ENCODE measurements at regions of chr1 and their contacts with region 1.

Region 1: GRCh38 chr1:32716312-32717148 is 14.0 kb upstream of the SYNC start:
- DNase-seq: peak in 5 of 9 experiments; percentile 3 to 58 (median 43)
- ATAC-seq: no peak
- H3K4me3 ChIP-seq: no peak overlapping the region
- H3K4me3 Mint-ChIP-seq: no peak overlapping the region
- H3K27ac ChIP-seq: no peak overlapping the region
- H3K27ac Mint-ChIP-seq: no peak overlapping the region
- H3K4me1 ChIP-seq: no peaks in the 10 kb centered on the region
- H3K4me1 Mint-ChIP-seq: peaks cover 11% of the 10 kb centered on the region
- H3K27me3 ChIP-seq: no peaks in the 10 kb centered on the region
- H3K27me3 Mint-ChIP-seq: peaks cover 7% of the 10 kb centered on the region
- CTCF ChIP-seq: no peak

Region 2: GRCh38 chr1:32205401-32206370 is 510.8 kb before region 1 on chr1 and contains the start of gene IQCC:
- CTCF ChIA-PET with region 1: no interaction called
- POLR2A ChIA-PET with region 1: no interaction called
- intact Hi-C with region 1: no loop called
- DNase-seq: peak; percentile 68 to 94 (median 85)
- ATAC-seq: peak; percentile 57
- H3K4me3 ChIP-seq: peak within 1 kb of the TSS; percentile 65 to 77
- H3K4me3 Mint-ChIP-seq: peak within 1 kb of the TSS; percentile 87
- H3K27ac ChIP-seq: peak within 1 kb of the TSS; percentile 62 to 67
- H3K27ac Mint-ChIP-seq: peak within 1 kb of the TSS; percentile 84
- H3K4me1 ChIP-seq: peaks cover 30% of the 10 kb centered on the region
- H3K4me1 Mint-ChIP-seq: peaks cover 36% of the 10 kb centered on the region
- H3K27me3 ChIP-seq: no peaks in the 10 kb centered on the region
- H3K27me3 Mint-ChIP-seq: no peaks in the 10 kb centered on the region
- CTCF ChIP-seq: no peak
- total RNA-seq, gene IQCC: 1.3 to 2.0 TPM

Region 3: GRCh38 chr1:32684167-32684811 is 32.2 kb before region 1 on chr1:
- CTCF ChIA-PET with region 1: interaction called, 18 read pairs
- POLR2A ChIA-PET with region 1: no interaction called
- intact Hi-C with region 1: no loop called
- DNase-seq: no peak
- ATAC-seq: no peak
- H3K4me3 ChIP-seq: no peak overlapping the region
- H3K4me3 Mint-ChIP-seq: no peak overlapping the region
- H3K27ac ChIP-seq: no peak overlapping the region
- H3K27ac Mint-ChIP-seq: peak overlapping the region; percentile 11
- H3K4me1 ChIP-seq: no peaks in the 10 kb centered on the region
- H3K4me1 Mint-ChIP-seq: no peaks in the 10 kb centered on the region
- H3K27me3 ChIP-seq: no peaks in the 10 kb centered on the region
- H3K27me3 Mint-ChIP-seq: no peaks in the 10 kb centered on the region
- CTCF ChIP-seq: no peak

Region 4: DNA sequence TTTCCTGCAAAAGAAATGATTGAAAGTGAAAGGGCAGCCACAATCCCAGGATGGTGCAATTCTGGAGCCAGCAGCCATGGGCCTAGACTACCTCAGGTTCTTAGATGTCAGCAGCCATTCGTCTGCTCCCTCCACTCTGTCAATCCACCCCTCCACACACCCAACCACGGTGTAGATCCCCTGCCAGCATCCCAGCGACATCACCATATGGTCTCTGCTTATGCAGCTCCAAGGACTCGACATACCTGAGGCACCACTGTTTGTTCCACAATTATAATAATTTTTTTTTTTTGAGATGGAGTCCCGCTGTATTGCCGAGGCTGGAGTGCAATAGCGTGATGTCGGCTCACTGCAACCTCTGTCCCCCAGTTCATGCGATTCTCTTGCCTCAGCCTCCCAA is 20.5 kb before region 1 on chr1:
- CTCF ChIA-PET with region 1: interaction called, 11 read pairs
- POLR2A ChIA-PET with region 1: no interaction called
- intact Hi-C with region 1: no loop called
- DNase-seq: no peak
- ATAC-seq: no peak
- H3K4me3 ChIP-seq: no peak overlapping the region
- H3K4me3 Mint-ChIP-seq: no peak overlapping the region
- H3K27ac ChIP-seq: no peak overlapping the region
- H3K27ac Mint-ChIP-seq: no peak overlapping the region
- H3K4me1 ChIP-seq: no peaks in the 10 kb centered on the region
- H3K4me1 Mint-ChIP-seq: peaks cover 2% of the 10 kb centered on the region
- H3K27me3 ChIP-seq: no peaks in the 10 kb centered on the region
- H3K27me3 Mint-ChIP-seq: peaks cover 4% of the 10 kb centered on the region
- CTCF ChIP-seq: no peak

Region 5: DNA sequence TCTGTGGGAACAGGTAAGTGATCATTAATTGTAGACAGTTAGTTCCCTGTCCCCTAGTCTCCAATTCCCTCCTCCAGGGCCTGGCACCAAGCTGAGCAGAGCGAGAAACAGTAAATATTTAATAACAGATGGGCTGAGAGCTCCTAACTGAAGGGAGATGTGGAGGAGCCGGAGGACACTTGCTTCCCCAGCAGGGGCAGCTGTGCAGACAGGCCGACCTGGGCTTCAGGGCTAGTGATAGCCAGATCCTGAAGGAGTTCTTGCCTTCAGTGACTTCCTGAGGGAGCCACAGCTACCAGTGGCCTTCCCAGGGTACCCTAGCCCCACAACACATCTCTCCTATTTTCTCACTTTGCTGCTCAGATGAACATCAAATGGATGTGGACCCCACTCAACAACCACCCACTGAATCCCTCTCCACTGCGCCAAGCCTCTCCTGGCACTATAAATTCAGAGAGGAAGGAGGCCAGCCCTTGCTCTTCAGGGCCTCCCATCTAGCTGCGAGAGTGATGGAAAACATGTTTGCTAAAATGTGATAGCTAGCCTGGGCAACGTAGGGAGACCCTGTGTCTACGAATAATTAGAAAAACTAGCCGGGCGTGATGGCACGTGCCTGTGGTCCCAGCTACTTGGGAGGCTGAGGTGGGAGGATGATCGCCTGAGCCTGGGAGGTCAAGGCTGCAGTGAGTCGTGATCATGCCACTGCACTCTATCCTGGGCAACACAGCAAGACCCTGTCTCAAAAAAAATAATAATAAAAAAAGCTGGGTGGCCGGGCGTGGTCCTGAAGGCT is 12.9 kb after region 1 on chr1:
- CTCF ChIA-PET with region 1: interaction called, 20 read pairs
- POLR2A ChIA-PET with region 1: no interaction called
- intact Hi-C with region 1: no loop called
- DNase-seq: no peak
- ATAC-seq: no peak
- H3K4me3 ChIP-seq: no peak overlapping the region
- H3K4me3 Mint-ChIP-seq: no peak overlapping the region
- H3K27ac ChIP-seq: no peak overlapping the region
- H3K27ac Mint-ChIP-seq: no peak overlapping the region
- H3K4me1 ChIP-seq: peaks cover 3% of the 10 kb centered on the region
- H3K4me1 Mint-ChIP-seq: peaks cover 12% of the 10 kb centered on the region
- H3K27me3 ChIP-seq: no peaks in the 10 kb centered on the region
- H3K27me3 Mint-ChIP-seq: peaks cover 11% of the 10 kb centered on the region
- CTCF ChIP-seq: no peak

Region 6: GRCh38 chr1:32876341-32877210 is 160.0 kb after region 1 on chr1:
- CTCF ChIA-PET with region 1: interaction called, 91 read pairs
- POLR2A ChIA-PET with region 1: no interaction called
- intact Hi-C with region 1: loop called (anchors 1 kb)
- DNase-seq: peak in 6 of 9 experiments; percentile 25 to 74 (median 68)
- ATAC-seq: peak; percentile 81
- H3K4me3 ChIP-seq: no peak overlapping the region
- H3K4me3 Mint-ChIP-seq: no peak overlapping the region
- H3K27ac ChIP-seq: no peak overlapping the region
- H3K27ac Mint-ChIP-seq: no peak overlapping the region
- H3K4me1 ChIP-seq: no peaks in the 10 kb centered on the region
- H3K4me1 Mint-ChIP-seq: peaks cover 9% of the 10 kb centered on the region
- H3K27me3 ChIP-seq: peaks cover 5 to 21% of the 10 kb centered on the region in 2 experiments
- H3K27me3 Mint-ChIP-seq: peaks cover 47% of the 10 kb centered on the region
- CTCF ChIP-seq: peak; percentile 61

Region 7: DNA sequence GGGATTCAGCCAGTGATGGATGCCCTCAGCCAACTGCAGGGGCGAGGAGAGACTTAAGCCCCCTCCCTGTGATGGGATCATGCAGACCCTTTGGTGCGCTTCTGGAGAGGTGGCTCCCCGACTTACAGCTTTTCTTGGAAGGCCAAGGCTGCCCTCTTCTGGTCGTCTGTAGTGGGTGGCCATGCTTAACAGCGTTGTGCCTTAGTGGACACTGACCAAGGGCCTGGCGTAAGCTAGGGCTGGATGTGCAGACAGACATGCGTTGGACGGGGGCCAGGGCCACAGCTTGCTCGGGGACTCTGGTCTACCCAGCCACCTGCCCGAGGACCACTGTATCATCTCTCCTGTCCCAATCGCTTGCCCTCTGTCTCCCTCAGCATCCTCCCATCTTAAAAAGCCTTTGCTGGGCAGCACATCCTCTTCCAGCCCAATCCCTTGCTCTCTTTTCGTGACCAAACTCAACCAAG is 369.9 kb after region 1 on chr1:
- CTCF ChIA-PET with region 1: interaction called, 3 read pairs
- POLR2A ChIA-PET with region 1: no interaction called
- intact Hi-C with region 1: loop called in 1 of 2 experiments (anchors 5 kb)
- DNase-seq: peak in 7 of 9 experiments; percentile 17 to 61 (median 37)
- ATAC-seq: peak; percentile 44
- H3K4me3 ChIP-seq: no peak overlapping the region
- H3K4me3 Mint-ChIP-seq: no peak overlapping the region
- H3K27ac ChIP-seq: no peak overlapping the region
- H3K27ac Mint-ChIP-seq: no peak overlapping the region
- H3K4me1 ChIP-seq: peaks cover 27% of the 10 kb centered on the region
- H3K4me1 Mint-ChIP-seq: peaks cover 41% of the 10 kb centered on the region
- H3K27me3 ChIP-seq: no peaks in the 10 kb centered on the region
- H3K27me3 Mint-ChIP-seq: no peaks in the 10 kb centered on the region
- CTCF ChIP-seq: no peak

Measured in CD8-positive, alpha-beta T cell (primary cell).